Heart right ventricle (tissue), 16 donors: ENCODE measurements at regions of chr3 and their contacts with region 1.

Region 1: DNA sequence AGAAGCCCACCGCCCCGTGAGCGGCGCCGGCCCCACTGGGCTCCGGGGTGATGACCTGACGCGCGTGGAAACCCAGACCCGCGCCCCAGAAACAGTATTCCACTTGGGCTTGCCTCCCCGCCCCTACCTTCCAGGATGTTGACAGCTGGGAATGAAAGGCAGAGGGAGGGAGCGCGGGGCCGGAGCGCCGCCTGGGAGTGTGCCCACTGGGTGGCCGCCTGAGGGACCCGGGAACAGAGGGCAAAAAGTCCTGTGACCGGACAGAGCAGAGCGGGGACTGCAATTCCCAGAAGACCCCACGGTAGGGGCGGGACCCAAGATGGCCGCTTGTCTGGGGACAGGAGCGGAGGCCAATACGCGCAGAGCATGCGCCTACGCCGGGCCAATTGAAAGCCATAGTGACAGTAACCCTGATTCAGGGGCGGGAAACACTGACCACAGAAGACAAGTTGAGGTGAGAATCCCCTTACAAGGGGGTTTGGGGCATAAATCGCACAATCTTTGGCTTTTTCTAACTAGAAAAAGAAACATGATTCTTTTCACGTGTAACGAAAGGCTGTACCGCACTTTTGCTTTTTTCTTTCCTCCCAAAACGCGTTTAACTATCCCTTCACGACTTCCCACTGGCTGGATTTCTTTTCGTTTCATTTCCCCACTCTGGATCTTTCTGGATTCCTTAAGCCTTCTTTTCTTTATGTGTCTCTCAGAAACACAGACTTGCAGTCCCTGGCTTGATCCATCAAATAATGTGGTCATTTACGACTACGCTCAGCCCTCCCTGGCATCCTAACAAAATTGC is at the start of gene FHIT:
- DNase-seq: peak; percentile 95
- ATAC-seq: peak; percentile 99
- H3K4me3 ChIP-seq: peak within 1 kb of the TSS; percentile 53 to 90 (median 74)
- H3K27ac ChIP-seq: peak within 1 kb of the TSS; percentile 53 to 93 (median 86)
- H3K4me1 ChIP-seq: peaks cover 0 to 30% (median 18%) of the 10 kb centered on the region in 9 donors
- H3K27me3 ChIP-seq: no peaks in the 10 kb centered on the region
- CTCF ChIP-seq: peak in 1 of 9 donors; percentile 19
- total RNA-seq, gene FHIT: 15.6 to 25.5 (median 19.3) TPM

Region 2: GRCh38 chr3:61154457-61155198 is 96.7 kb before region 1 on chr3:
- intact Hi-C with region 1: loop called in 1 of 10 experiments (anchors 2 kb)
- DNase-seq: no peak
- ATAC-seq: no peak
- H3K4me3 ChIP-seq: no peak overlapping the region
- H3K27ac ChIP-seq: no peak overlapping the region
- H3K4me1 ChIP-seq: peaks cover 0 to 25% (median 7%) of the 10 kb centered on the region in 9 donors
- H3K27me3 ChIP-seq: no peaks in the 10 kb centered on the region
- CTCF ChIP-seq: no peak